Head of caudate nucleus (tissue), 42 donors: ENCODE measurements at regions of chr20 and their contacts with region 1.

Region 1: DNA sequence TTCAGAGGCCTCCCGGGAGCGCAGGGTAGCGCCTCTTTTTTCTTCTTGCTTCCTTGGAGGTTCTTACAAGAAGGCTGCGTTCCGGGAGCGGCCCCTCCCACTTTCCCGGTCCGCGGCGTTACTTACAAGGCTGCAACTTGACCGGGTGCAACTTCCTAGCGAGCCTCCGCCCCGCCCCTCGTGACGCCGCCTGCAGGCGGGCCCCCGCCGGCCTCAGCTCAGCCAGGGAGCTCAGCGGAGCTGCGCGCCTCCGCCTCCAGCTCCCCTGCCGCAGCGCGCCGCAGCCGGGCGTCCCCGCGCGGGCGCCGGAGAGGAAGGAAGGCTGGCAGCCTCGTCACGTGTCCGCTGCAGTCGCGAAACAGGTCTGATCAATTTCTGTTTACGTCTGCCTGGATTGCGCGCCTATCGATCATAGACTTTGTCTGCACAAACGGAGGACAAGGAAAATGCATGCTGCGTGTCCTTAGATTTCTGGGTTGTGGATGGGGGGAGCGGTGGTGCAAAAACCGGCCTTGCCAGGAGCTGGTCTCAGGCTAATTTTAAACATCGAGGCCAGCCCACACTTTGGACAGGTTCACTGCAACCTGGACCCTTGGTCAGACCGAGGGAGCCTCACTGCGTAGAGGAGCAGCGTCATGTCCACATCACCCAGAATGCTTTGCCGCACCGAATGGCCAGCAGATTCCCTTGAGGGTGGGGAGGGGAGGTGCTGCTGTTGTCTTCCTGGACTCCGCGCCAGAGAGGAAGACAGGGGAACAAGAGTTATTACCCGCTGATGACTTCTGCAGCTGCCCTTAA is at the starts of genes FAM217B and PPP1R3D:
- DNase-seq: peak; percentile 86 to 97 (median 95)

Region 2: GRCh38 chr20:60057123-60057801 is 116.9 kb after region 1 on chr20:
- intact Hi-C with region 1: loop called (anchors 5 kb)
- DNase-seq: peak; percentile 42 to 88 (median 76)